Calu3 (cell line): ENCODE measurements at regions of chr1 and their contacts with region 1.

Region 1: DNA sequence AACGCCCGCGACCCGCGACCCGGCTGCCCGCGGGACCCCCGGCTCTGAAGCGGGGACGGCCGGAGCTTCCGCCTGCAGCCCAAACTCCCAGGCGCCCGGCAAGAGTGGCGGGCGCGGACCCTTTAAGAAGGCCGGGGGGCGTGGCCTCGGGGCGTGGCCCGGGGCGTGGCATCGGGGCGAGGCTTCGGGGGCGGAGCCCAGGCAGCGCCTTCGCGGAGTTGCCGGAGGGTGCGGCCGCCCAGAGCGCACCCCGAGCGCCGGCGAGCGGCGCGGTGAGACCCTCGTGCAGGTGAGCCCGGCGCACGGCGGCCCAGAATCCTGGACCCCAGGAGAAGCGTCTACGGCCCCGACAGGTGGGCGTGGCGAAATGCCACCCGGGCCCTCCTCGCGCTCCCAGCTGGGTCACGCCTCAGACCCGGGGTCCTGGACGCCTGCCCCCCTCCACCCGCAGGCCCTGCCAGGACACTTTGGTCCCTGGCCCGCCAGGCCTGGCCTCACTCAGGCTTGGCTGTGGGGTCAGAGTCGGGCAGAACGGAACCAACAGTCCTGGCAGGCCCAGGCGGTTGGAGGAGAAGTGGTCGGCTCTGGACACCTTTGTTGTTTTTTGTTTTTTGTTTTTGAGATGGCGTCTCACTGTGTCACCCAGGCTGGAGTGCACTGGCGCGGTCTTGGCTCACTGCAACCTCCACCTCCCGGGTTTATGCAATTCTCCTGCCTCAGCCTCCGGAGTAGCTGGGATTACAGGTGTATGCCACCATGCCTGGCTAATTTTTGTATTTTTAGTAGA is 14.4 kb downstream of the RNF223 start:
- DNase-seq: peak; percentile 93
- H3K4me3 Mint-ChIP-seq: peak overlapping the region; percentile 73
- H3K27ac Mint-ChIP-seq: peak overlapping the region; percentile 70
- H3K4me1 Mint-ChIP-seq: no peaks in the 10 kb centered on the region
- H3K27me3 Mint-ChIP-seq: no peaks in the 10 kb centered on the region
- CTCF ChIP-seq: no peak

Region 2: DNA sequence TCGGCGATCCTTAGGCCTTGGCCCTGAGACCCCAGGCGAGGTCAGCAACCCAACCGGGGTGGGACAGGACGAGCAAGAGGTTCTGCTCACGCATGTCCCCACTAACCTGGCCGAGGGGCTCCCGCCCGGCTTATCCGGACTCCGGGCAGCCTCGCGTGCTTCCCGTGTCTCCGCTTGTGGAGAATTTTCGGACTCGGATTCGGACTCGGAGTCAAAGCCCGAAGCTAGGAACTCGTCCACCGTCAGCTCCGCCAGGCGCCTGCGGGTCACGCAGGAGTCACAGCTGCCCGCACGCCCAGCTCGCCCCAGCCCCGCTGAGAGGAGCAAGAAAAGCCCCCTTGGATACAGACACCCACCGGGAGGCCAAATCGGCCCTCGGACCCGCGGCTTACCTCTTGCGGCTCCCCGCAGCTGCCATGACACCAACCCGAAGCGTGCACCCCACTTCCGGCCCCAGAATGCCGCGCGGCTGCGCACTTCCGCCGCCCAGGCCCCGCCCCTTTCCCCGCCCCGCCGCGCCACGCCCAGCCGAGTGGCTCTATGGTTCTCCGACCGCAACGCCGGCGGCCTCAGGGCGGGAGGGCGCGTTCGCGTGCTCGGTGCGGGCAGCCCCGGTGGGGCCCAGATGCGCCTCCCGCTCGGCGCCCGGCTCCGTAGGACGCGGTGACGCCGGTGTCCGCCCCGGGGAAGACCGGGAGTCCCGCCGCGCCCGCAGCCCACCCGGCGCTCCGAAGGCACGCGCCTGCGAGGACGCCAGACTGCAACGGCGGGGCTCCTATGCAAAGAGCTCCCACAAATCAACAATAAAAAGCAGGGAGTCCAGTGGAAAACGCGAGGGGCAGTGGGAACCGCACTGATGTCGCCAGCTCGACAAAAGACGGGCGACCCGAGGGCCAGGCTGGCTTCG is 100.6 kb before region 1 on chr1 and contains the start of gene NOC2L:
- CTCF ChIA-PET with region 1: no interaction called
- intact Hi-C with region 1: no loop called
- DNase-seq: peak; percentile 91
- H3K4me3 Mint-ChIP-seq: peak within 1 kb of the TSS; percentile 85
- H3K27ac Mint-ChIP-seq: peak within 1 kb of the TSS; percentile 47
- H3K4me1 Mint-ChIP-seq: peaks cover 15% of the 10 kb centered on the region
- H3K27me3 Mint-ChIP-seq: no peaks in the 10 kb centered on the region
- CTCF ChIP-seq: no peak
- total RNA-seq, gene NOC2L: 98.6 and 107 TPM in 2 replicates

Region 3: DNA sequence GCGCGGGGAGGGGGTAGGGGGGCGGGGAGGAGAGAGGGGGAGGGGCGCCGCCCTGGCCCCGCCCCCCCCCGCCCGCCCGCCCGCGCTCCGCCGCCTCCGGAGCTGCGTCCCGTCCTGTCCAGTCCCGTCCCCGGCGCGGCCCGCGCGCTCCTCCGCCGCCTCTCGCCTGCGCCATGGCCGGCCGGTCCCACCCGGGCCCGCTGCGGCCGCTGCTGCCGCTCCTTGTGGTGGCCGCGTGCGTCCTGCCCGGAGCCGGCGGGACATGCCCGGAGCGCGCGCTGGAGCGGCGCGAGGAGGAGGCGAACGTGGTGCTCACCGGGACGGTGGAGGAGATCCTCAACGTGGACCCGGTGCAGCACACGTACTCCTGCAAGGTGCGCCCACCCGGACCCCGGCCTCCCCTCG is 39.7 kb before region 1 on chr1 and contains the start of gene AGRN:
- CTCF ChIA-PET with region 1: interaction called, 7 read pairs
- intact Hi-C with region 1: loop called (anchors 5 kb)
- DNase-seq: peak; percentile 50
- H3K4me3 Mint-ChIP-seq: peak within 1 kb of the TSS; percentile 73
- H3K27ac Mint-ChIP-seq: peak within 1 kb of the TSS; percentile 44
- H3K4me1 Mint-ChIP-seq: peaks cover 18% of the 10 kb centered on the region
- H3K27me3 Mint-ChIP-seq: no peaks in the 10 kb centered on the region
- CTCF ChIP-seq: no peak
- total RNA-seq, gene AGRN: 446 and 552 TPM in 2 replicates